ENCODE measurements at regions of chrX and their contacts with region 1.

Region 1: DNA sequence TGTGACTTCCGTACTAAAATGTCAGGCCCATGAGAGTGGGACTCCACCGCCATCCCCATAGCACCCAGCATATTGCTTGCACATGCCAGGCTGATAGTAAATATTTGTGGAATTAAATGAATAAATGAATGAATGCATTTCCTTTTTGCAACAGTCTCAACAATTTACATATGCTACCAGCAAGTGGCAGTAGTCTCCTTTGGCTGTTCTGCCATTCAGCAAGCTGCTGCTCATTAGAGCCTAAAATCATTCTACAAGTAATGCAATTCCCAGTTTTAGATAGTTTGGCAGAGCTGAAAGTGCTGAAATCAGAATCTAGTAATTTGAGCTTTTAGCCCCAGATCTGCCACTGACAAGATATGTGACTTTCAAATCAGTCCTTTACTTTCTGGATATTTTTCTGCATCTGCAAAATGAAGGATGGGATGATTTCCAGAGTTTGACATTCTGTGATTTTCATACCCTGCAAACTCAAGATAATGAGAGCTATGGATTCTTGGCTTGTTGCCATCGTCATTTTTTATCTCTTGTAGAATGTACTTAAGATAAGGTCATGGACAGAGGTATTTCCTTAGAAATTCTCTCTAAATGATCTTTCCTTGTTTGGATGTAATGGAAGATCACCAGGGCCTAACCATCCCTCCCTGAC is 35.7 kb upstream of the INTS6L start:
- DNase-seq: peak in 1 of 10 donors; percentile 11
- H3K4me3 ChIP-seq: no peak overlapping the region
- H3K27ac ChIP-seq: no peak overlapping the region
- H3K27me3 ChIP-seq: peaks cover 0 to 75% (median 12%) of the 10 kb centered on the region in 45 donors
- CTCF ChIP-seq: peak; percentile 18 to 74 (median 54)

Region 2: DNA sequence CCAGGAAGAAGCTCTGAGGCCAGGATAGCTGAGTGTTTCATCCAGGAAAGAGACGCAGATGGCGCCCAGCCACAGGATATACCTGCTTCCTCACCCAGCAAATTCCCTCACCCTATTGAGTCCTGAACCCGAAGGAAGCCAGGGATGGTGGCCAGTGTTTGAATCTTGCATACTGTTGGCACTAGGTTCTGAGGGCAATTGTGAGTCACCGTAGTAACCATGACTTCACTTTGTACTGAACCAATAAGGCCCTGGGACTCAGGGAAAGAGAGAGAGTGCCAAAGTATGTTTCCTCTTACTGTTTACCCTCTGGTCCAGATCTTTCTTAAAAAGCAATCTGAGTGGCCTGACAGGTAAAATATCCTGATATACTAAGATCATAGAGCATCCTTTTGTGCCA is 88.7 kb before region 1 on chrX:
- intact Hi-C with region 1: no loop called
- DNase-seq: no peak
- H3K4me3 ChIP-seq: no peak overlapping the region
- H3K27ac ChIP-seq: no peak overlapping the region
- H3K27me3 ChIP-seq: peaks cover 0 to 56% (median 7%) of the 10 kb centered on the region in 45 donors
- CTCF ChIP-seq: no peak

Region 3: GRCh38 chrX:135432881-135433521 is 51.8 kb before region 1 on chrX:
- intact Hi-C with region 1: loop called in 1 of 2 experiments (anchors 5 kb)
- DNase-seq: peak in 6 of 10 donors; percentile 24 to 69 (median 56)
- H3K4me3 ChIP-seq: peak overlapping the region in 19 of 59 donors; percentile 5 to 46 (median 25)
- H3K27ac ChIP-seq: no peak overlapping the region
- H3K27me3 ChIP-seq: peaks cover 0 to 60% (median 9%) of the 10 kb centered on the region in 45 donors
- CTCF ChIP-seq: peak in 1 of 56 donors; percentile 11

Region 4: GRCh38 chrX:135572436-135572835 is 87.7 kb after region 1 on chrX:
- intact Hi-C with region 1: loop called in 1 of 2 experiments (anchors 10 kb)
- DNase-seq: no peak
- H3K4me3 ChIP-seq: no peak overlapping the region
- H3K27ac ChIP-seq: no peak overlapping the region
- H3K27me3 ChIP-seq: peaks cover 0 to 55% (median 9%) of the 10 kb centered on the region in 45 donors
- CTCF ChIP-seq: peak in 51 of 56 donors; percentile 37 to 71 (median 53)